ENCODE measurements at regions of chr10 and their contacts with region 1.

Region 1: DNA sequence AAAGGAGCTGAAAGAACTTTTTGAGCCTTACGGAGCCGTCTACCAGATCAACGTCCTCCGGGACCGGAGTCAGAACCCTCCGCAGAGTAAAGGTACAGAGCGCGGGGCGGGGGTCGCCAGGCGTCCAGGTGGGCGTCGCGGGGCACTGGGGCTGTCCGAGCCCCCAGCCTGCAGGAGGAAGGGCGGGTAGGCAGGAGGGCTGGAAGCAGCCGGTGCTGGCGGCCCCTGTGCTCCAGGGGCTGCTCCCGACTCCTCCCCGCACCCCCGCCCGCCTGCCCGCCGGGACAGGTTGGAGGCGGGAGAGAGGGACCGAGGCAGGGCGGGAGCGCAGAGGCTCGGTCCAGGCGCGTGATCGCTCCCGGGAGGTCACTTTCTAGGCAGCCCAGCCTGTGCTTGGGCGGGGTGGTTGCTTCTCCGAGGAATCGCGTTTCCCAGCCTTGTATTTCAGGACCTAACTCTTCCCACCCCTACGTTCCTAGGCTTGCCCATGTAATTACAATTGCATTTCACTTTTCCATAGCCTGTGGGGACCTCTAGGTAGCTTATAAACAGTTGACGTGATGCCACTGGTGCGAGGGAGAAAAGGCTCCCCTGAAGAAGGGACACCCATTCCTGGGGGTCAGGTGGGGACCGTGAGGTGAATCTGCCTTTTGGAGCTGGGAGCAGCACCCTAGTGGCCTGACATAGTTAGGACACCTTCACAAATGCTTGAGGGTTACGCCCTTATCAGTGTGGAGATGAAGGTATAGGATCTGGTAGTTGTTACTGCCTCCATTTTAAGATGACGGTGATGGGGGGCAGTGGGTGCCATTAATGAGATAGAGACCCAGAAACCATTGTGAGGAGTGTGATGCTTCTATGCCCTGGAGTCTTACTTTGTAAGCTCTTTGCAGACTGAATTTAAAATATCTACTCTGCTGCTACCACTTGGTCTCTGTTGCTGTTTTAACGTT is 148.2 kb downstream of the CELF2 start:
- DNase-seq: peak; percentile 88
- ATAC-seq: peak; percentile 65
- H3K4me3 Mint-ChIP-seq: no peak overlapping the region
- H3K27ac Mint-ChIP-seq: peak overlapping the region; percentile 96
- H3K4me1 Mint-ChIP-seq: peaks cover 32% of the 10 kb centered on the region
- H3K27me3 Mint-ChIP-seq: no peaks in the 10 kb centered on the region

Region 2: GRCh38 chr10:11106621-11107374 is 59.1 kb before region 1 on chr10:
- CTCF ChIA-PET with region 1: interaction called, 25 read pairs
- POLR2A ChIA-PET with region 1: interaction called, 31 read pairs
- DNase-seq: no peak
- ATAC-seq: no peak
- H3K4me3 Mint-ChIP-seq: no peak overlapping the region
- H3K27ac Mint-ChIP-seq: no peak overlapping the region
- H3K4me1 Mint-ChIP-seq: peaks cover 16% of the 10 kb centered on the region
- H3K27me3 Mint-ChIP-seq: peaks cover 8% of the 10 kb centered on the region

Region 3: DNA sequence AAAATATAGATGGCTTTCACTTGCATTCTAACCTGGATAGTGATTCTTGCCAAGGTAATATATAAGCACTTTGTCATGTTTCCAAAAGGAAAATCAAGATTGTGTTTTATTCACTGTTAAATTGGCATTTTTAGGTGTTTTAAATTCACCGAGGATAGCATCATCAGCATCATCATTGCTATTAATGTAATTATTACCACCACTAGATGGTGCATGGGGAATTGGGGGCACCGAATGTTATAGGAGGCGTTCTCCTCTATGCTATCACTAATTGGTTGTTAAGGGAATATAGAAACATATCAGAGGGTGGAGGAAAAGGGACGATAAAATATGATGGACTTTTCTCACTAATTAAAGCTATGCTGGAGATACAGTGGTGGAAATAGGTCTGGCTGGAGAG is 52.7 kb before region 1 on chr10:
- CTCF ChIA-PET with region 1: interaction called, 25 read pairs
- POLR2A ChIA-PET with region 1: interaction called, 29 read pairs
- DNase-seq: peak; percentile 51
- ATAC-seq: peak; percentile 95
- H3K4me3 Mint-ChIP-seq: no peak overlapping the region
- H3K27ac Mint-ChIP-seq: no peak overlapping the region
- H3K4me1 Mint-ChIP-seq: peaks cover 10% of the 10 kb centered on the region
- H3K27me3 Mint-ChIP-seq: no peaks in the 10 kb centered on the region

Region 4: GRCh38 chr10:11145495-11145855 is 20.4 kb before region 1 on chr10:
- CTCF ChIA-PET with region 1: interaction called, 324 read pairs
- POLR2A ChIA-PET with region 1: interaction called, 1,291 read pairs
- DNase-seq: peak; percentile 86
- ATAC-seq: peak; percentile 69
- H3K4me3 Mint-ChIP-seq: peak overlapping the region; percentile 72
- H3K27ac Mint-ChIP-seq: peak overlapping the region; percentile 99
- H3K4me1 Mint-ChIP-seq: peaks cover 94% of the 10 kb centered on the region
- H3K27me3 Mint-ChIP-seq: no peaks in the 10 kb centered on the region

Region 5: GRCh38 chr10:11225935-11226334 is 60.1 kb after region 1 on chr10:
- CTCF ChIA-PET with region 1: interaction called, 6 read pairs
- POLR2A ChIA-PET with region 1: interaction called, 16 read pairs
- DNase-seq: peak; percentile 71
- ATAC-seq: peak; percentile 77
- H3K4me3 Mint-ChIP-seq: no peak overlapping the region
- H3K27ac Mint-ChIP-seq: peak overlapping the region; percentile 92
- H3K4me1 Mint-ChIP-seq: peaks cover 95% of the 10 kb centered on the region
- H3K27me3 Mint-ChIP-seq: no peaks in the 10 kb centered on the region

Region 6: GRCh38 chr10:11236234-11236633 is 70.4 kb after region 1 on chr10:
- CTCF ChIA-PET with region 1: interaction called, 14 read pairs
- POLR2A ChIA-PET with region 1: interaction called, 6 read pairs
- DNase-seq: peak; percentile 58
- ATAC-seq: peak; percentile 85
- H3K4me3 Mint-ChIP-seq: peak overlapping the region; percentile 26
- H3K27ac Mint-ChIP-seq: peak overlapping the region; percentile 43
- H3K4me1 Mint-ChIP-seq: peaks cover 87% of the 10 kb centered on the region
- H3K27me3 Mint-ChIP-seq: no peaks in the 10 kb centered on the region